Activated CD8-positive, alpha-beta T cell treated with anti-CD3 and anti-CD28 coated beads for 36 hours (primary cell): ENCODE measurements at regions of chr10 and their contacts with region 1.

Region 1: DNA sequence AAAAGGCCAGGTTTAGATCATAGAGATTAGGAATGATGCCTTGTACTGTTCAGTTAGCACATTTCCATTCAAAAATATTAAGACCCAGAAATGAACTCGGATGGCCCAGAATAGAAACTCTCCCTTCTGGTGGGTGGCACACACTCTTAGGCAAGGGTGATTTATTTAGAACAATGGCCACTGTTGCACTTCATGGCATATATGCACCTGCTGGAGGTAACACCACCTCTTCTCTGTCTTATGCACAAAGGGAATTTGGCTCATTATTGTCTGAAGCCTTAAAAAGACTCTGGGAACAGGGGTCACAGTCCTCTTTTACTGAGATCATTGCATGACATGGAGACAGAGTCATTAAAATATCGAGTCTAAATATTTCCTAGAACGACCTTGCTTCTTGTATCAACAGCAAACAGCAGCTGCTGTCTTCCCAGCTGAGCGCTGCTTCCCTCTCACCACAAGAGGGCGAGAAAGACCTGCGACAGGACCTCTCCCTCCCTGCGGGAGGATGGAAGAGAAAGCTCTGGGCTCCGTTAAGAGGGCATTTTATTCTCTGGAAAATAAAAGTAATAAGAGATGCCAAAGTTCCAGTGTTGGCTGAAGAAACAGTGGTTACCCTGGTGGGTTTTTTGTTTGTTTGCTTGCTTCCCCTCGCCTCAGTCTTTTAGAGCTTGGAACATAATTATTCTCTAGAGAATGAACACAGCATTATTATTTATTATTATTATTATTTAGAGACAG is 13.6 kb upstream of the BAMBI start:
- DNase-seq: peak; percentile 76
- ATAC-seq: peak; percentile 79
- H3K4me3 Mint-ChIP-seq: no peak overlapping the region
- H3K27ac Mint-ChIP-seq: no peak overlapping the region
- H3K4me1 Mint-ChIP-seq: peaks cover 7% of the 10 kb centered on the region
- H3K27me3 Mint-ChIP-seq: peaks cover 36% of the 10 kb centered on the region
- CTCF ChIP-seq: peak; percentile 94

Region 2: DNA sequence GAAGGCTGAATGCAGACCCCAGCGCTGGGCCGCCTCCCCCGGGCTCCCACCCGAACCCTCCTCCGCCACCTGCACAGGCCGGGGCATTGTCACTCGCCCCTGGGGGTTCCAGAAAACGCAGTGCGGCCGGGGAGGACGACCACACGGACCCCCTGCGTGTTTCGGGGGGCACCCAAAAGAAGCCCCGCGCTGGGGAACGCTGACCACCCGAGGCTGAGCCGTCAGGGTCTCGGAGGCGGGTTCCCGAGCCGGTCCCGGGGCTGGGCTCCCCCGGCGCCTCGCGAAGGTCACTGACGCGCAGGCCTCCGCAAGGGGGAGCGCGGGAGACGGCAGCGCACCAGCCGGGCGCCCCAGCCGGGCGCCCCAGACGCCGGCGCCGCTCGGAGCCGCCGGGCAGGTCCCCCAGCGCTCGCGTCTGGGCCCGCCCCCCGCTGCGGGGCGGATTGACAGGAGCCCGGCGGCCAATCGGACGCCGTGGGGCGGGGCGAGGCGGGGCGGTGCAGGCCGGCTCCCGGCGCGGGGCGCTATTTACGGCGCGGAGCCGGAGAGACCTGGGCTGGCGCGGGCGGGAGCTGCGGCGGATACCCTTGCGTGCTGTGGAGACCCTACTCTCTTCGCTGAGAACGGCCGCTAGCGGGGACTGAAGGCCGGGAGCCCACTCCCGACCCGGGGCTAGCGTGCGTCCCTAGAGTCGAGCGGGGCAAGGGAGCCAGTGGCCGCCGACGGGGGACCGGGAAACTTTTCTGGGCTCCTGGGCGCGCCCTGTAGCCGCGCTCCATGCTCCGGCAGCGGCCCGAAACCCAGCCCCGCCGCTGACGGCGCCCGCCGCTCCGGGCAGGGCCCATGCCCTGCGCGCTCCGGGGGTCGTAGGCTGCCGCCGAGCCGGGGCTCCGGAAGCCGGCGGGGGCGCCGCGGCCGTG is 13.5 kb after region 1 on chr10 and contains the start of gene BAMBI:
- CTCF ChIA-PET with region 1: interaction called, 34 read pairs
- POLR2A ChIA-PET with region 1: no interaction called
- intact Hi-C with region 1: no loop called
- DNase-seq: peak; percentile 89
- ATAC-seq: peak; percentile 99
- H3K4me3 Mint-ChIP-seq: peak within 1 kb of the TSS; percentile 70
- H3K27ac Mint-ChIP-seq: no peak within 1 kb of the TSS
- H3K4me1 Mint-ChIP-seq: peaks cover 37% of the 10 kb centered on the region
- H3K27me3 Mint-ChIP-seq: peaks cover 59% of the 10 kb centered on the region
- CTCF ChIP-seq: peak; percentile 5
- total RNA-seq, gene BAMBI: 0.18 to 0.27 TPM

Region 3: DNA sequence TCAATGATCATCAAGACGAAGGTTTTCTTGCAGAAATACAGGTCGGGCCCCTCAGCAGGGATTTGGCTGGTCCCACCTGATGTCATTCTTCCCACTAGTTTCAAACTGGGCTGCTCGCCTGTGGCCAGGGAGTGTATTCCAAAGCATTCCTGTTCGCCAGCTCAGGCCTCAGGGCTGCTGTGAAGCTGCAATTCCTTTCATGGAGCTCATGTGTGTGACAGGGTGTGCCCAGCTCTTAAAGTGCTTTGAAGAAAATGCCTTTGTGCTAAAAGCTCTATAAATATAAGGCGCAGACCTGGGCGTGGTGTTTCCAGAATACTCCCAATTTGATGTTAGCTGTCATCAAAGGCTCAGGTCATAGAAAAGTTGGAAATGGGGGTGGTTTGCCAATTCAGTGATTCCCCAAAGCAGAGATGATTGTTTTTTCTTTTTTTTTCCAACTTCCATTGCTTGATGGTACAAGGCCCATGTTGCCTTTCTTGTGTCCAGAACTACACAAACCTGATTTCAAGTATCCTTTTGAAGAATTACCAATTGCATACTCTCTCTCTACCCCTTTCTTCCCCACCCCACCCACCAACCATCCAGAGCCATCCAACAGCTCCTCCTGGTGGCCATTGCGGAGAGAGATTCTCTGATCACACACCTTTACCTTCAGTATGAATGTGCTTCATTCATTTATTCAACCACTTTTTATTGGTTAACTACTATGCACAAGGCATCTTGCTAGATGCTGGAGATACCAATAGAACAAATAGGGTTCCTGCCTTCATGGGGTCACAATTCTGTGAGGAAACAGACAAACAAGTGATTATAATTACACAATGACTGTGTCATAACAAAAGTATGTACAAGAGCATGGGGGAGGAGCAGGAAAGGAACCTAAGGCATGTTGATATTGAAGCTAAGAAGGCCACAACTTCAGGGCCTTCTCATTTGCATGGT is 327.9 kb after region 1 on chr10:
- CTCF ChIA-PET with region 1: interaction called, 38 read pairs
- POLR2A ChIA-PET with region 1: no interaction called
- intact Hi-C with region 1: loop called (anchors 5 kb)
- DNase-seq: peak; percentile 42
- ATAC-seq: peak; percentile 37
- H3K4me3 Mint-ChIP-seq: no peak overlapping the region
- H3K27ac Mint-ChIP-seq: no peak overlapping the region
- H3K4me1 Mint-ChIP-seq: no peaks in the 10 kb centered on the region
- H3K27me3 Mint-ChIP-seq: peaks cover 5% of the 10 kb centered on the region
- CTCF ChIP-seq: peak; percentile 47

Region 4: DNA sequence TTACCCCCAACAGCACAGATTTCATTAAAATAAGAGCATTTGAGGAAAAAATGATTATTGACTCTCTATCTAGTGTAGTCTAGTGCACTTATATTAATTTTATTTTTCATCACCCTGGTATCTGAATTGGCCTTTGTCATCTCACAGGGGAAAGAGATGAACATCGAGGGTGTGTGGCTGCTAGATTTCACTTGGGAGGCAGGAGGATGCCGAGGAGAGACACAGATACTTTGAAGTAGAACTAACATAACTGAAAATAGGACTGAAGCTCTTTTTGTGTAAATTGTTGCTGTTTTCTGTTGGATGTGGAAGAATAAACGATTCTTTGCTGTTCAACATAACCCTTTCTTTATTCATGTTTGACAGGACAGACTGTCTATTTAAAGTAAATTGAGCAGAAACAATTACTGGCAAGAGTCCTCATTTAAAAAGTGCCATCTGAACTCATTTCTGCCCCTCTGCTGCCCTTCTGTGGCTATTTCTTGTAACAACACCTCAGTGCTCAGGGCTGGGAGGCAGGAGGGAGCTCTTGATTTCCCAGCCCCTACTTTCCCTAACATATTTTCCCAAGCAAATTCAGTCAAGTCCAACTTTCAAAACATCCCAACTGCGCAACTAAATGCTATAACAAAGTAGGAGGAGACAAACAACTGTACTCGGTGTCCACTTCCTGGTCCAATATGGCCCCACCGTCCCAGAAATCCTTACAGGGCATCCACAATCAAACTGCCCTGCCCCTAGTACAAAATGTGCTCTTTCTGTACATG is 640.7 kb after region 1 on chr10:
- CTCF ChIA-PET with region 1: interaction called, 24 read pairs
- POLR2A ChIA-PET with region 1: no interaction called
- intact Hi-C with region 1: loop called (anchors 2 kb)
- DNase-seq: peak; percentile 53
- ATAC-seq: peak; percentile 65
- H3K4me3 Mint-ChIP-seq: no peak overlapping the region
- H3K27ac Mint-ChIP-seq: no peak overlapping the region
- H3K4me1 Mint-ChIP-seq: no peaks in the 10 kb centered on the region
- H3K27me3 Mint-ChIP-seq: peaks cover 24% of the 10 kb centered on the region
- CTCF ChIP-seq: peak; percentile 75